AG04450 (cell line): ENCODE measurements at regions of chr17 and their contacts with region 1.

Region 1: DNA sequence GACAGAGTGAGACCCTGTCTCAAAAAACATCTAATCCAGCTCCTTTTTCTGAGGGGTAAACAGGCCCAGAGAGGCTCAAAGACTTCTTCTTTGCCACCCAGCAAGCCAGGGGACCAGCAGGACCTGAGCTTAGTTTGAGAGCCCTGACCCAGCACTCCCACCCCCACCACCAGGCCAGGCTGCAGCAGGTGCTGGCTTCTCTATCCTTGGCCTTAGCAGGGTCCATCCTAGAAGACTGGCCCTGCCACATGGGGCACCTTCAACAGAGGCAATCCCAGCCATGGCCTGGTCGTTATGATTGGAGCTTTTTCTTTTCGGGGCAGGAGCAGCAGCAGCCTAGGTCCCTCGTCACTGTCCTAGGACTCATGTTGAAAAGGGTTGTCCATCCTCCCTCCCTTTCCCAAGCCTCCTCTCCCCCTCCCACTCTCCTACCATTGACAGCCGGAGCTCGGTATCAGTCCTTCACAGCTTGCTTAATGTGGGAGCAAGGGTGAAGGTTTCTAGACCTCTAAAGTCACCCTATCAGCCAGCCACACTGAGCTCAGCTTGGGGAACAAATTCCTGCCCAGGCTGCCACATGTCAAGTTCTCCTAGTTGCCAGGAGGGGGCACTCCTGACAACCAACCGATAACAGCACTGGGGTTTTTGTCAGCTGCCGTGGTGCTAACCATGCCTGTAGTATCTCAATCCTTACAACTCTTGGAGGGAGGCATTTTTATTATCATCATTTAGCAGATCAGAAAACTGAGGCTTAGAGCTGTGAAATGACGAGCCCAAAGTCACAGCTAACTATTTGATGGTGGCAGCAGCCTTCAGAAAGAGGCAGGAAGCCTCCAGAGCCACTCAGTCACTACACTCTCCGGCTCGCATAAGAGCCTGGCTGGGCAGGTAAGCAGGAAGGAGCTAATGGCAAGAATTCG is 11.2 kb downstream of the MRPL27 start:
- DNase-seq: peak; percentile 49
- H3K4me3 ChIP-seq: no peak overlapping the region
- H3K27ac ChIP-seq: no peak overlapping the region
- H3K27me3 ChIP-seq: no peaks in the 10 kb centered on the region
- CTCF ChIP-seq: peak; percentile 80

Region 2: DNA sequence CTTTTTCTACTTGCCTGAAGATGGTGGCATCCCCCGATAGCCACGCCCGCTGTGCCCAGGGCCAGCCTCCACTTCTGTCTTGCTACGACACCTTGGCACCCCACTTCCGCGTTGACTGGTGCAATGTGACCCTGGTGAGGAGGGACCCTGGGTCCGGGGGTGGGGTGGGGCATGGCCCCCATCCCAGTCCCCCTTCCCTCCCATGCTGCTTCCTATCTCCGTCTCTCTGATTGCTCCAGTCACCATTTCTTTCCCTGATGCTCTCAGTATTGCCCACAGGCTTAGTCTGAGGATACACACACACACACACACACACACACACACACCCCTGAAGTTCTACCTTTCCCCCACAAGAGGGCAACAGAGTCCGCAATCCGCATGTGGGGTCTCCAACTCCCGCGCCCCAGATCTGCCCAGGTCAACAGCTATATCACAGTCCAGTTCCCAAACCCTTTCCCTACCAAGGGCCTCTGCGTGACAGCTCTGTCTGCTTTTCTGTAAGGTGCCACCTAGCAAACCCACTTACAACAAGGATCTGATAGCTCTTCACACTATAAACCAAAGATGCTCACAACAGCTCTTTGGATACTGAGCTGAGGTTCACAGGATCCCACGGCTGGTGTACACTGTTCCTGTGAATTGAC is 192.6 kb before region 1 on chr17:
- CTCF ChIA-PET with region 1: interaction called, 18 read pairs
- POLR2A ChIA-PET with region 1: no interaction called
- DNase-seq: no peak
- H3K4me3 ChIP-seq: no peak overlapping the region
- H3K27ac ChIP-seq: no peak overlapping the region
- H3K27me3 ChIP-seq: no peaks in the 10 kb centered on the region
- CTCF ChIP-seq: peak; percentile 98

Region 3: DNA sequence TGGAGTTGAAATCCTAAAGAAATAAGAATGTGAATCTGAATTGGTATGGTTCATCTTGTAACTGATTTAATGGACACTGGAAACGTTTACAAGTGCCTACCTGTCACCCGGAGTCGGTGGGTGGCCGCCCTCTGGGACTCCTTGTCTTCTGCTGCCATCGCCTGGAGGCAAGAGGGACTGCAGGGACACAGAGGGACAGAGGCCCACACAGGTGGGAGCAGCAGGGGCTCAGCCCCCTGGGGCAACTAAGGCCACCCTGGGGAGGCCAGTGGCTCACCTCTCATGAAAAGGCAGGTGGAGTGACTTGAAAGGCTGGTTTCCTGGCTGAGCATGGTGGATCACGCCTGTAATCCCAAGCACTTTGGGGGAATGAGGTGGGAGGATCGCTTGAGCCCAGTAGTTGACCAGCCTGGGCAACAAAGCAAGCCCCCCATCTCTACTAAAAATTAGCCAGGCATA is 64.4 kb before region 1 on chr17:
- CTCF ChIA-PET with region 1: interaction called, 11 read pairs
- POLR2A ChIA-PET with region 1: interaction called, 3 read pairs
- DNase-seq: no peak
- H3K4me3 ChIP-seq: no peak overlapping the region
- H3K27ac ChIP-seq: no peak overlapping the region
- H3K27me3 ChIP-seq: no peaks in the 10 kb centered on the region
- CTCF ChIP-seq: peak; percentile 82

Region 4: DNA sequence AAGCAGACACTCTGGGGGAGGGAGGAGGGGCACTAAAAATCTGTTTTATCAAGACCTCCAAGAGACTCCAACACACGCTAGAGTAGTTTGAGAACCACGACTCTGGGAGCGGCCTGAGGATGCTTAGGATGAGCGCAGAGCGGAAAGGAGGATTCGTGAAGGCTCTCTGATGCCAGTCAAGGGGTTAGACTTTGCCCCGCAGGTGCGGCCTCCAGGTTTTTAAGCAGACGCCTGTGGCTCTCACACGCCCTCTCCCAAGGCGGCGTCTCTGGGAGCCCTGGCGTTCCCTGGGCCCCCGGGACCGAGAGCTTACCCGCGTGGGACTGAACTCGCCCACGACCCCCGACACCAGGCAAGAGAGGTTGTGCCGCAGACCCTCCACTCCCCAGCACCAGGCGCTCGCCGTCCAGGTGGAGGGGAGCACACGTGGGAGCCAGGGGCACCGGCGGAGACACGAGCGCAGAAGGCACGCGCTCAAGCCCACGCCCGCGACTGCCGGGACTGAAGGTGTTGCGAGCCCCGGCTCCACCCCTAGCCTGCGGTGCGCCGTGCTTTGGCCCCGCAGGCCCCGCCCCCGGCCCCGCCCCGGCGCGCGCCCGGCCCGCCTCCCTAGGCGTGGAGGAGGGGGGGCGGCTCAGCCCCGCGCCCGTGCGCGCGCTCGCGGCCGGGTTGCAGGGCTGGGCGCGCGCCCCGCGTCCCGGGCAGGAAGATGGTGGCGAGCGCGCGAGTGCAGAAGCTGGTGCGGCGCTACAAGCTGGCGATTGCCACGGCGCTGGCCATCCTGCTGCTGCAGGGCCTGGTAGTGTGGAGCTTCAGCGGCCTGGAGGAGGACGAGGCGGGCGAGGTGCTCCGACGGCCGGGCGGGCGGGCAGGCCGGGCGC is 16.1 kb before region 1 on chr17 and contains the start of gene XYLT2:
- CTCF ChIA-PET with region 1: interaction called, 29 read pairs
- POLR2A ChIA-PET with region 1: interaction called, 4 read pairs
- DNase-seq: no peak
- H3K4me3 ChIP-seq: peak within 1 kb of the TSS; percentile 85
- H3K27ac ChIP-seq: no peak within 1 kb of the TSS
- H3K27me3 ChIP-seq: no peaks in the 10 kb centered on the region
- CTCF ChIP-seq: no peak
- polyA plus RNA-seq, gene XYLT2: 13.5 and 19.0 TPM in 2 replicates

Region 5: GRCh38 chr17:50397111-50397918 is 35.5 kb after region 1 on chr17 and contains the start of gene LRRC59:
- CTCF ChIA-PET with region 1: interaction called, 45 read pairs
- POLR2A ChIA-PET with region 1: interaction called, 6 read pairs
- DNase-seq: peak; percentile 53
- H3K4me3 ChIP-seq: peak within 1 kb of the TSS; percentile 94
- H3K27ac ChIP-seq: peak within 1 kb of the TSS; percentile 91
- H3K27me3 ChIP-seq: no peaks in the 10 kb centered on the region
- CTCF ChIP-seq: peak; percentile 87
- polyA plus RNA-seq, gene LRRC59: 143 and 145 TPM in 2 replicates

Region 6: DNA sequence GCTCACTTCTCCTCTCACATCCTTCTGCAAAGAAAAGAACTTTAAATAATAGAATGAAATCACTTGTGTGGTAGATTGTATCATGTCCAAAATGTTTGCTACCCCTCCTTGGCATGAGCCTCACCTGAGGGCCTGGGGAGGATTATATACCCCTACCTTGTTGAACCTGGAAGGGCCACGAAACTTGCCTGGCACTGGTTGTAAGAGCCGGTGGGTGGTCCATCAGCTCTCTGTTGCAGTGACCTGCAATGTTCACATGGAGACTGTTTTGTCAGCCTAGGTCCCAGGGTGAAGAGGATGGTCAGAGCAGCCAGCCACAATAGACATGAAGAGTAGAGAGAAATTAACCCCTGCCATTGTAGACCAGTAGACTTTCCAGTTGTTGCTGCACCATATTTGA is 127.1 kb after region 1 on chr17:
- CTCF ChIA-PET with region 1: no interaction called
- POLR2A ChIA-PET with region 1: no interaction called
- DNase-seq: no peak
- H3K4me3 ChIP-seq: no peak overlapping the region
- H3K27ac ChIP-seq: no peak overlapping the region
- H3K27me3 ChIP-seq: peaks cover 5% of the 10 kb centered on the region
- CTCF ChIP-seq: no peak